Transverse colon (tissue), 4 donors: ENCODE measurements at regions of chr5 and their contacts with region 1.

Region 1: GRCh38 chr5:134648425-134649162 is at the start of gene SEC24A:
- DNase-seq: peak; percentile 94
- H3K4me3 ChIP-seq: peak within 1 kb of the TSS; percentile 79 to 95 (median 88)
- H3K27ac ChIP-seq: peak within 1 kb of the TSS; percentile 92 to 98 (median 96)
- H3K4me1 ChIP-seq: peaks cover 3 to 37% (median 22%) of the 10 kb centered on the region in 4 donors
- H3K27me3 ChIP-seq: no peaks in the 10 kb centered on the region
- CTCF ChIP-seq: peak in 2 of 5 experiments; percentile 15 to 20
- EP300 ChIP-seq: no peak
- POLR2A ChIP-seq: peak; percentile 81
- total RNA-seq, gene SEC24A: 9.2 to 26.7 (median 18.6) TPM

Region 2: GRCh38 chr5:134188092-134188491 is 460.5 kb before region 1 on chr5:
- in situ Hi-C with region 1: no loop called
- intact Hi-C with region 1: no loop called
- DNase-seq: no peak
- H3K4me3 ChIP-seq: no peak overlapping the region
- H3K27ac ChIP-seq: no peak overlapping the region
- H3K4me1 ChIP-seq: no peaks in the 10 kb centered on the region
- H3K27me3 ChIP-seq: no peaks in the 10 kb centered on the region
- CTCF ChIP-seq: no peak
- EP300 ChIP-seq: no peak
- POLR2A ChIP-seq: no peak

Region 3: GRCh38 chr5:134626369-134627014 is 22.1 kb before region 1 on chr5:
- in situ Hi-C with region 1: no loop called
- intact Hi-C with region 1: loop called (anchors 1 kb)
- DNase-seq: no peak
- H3K4me3 ChIP-seq: no peak overlapping the region
- H3K27ac ChIP-seq: peak overlapping the region; percentile 32 to 67 (median 51)
- H3K4me1 ChIP-seq: peaks cover 5 to 36% (median 23%) of the 10 kb centered on the region in 4 donors
- H3K27me3 ChIP-seq: no peaks in the 10 kb centered on the region
- CTCF ChIP-seq: no peak
- EP300 ChIP-seq: no peak
- POLR2A ChIP-seq: no peak

Region 4: DNA sequence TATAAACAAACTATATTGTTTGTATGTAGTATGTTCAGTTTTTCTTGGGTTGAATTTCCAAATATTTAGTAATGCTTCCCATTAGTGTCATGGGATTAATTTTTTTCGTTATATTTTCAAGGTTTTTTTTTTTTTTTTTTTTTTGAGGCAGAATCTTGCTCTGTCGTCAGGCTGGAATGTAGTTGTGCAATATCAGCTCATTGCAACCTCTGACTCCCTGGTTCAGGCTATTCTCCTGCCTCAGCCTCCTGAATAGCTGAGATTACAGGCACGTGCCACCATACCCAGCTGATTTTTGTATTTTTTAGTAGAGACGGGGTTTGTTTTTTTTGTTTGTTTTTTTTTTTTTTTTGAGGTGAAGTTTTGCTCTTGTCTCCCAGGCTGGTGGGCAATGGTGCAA is 120.6 kb after region 1 on chr5:
- in situ Hi-C with region 1: no loop called
- intact Hi-C with region 1: no loop called
- DNase-seq: no peak
- H3K4me3 ChIP-seq: no peak overlapping the region
- H3K27ac ChIP-seq: no peak overlapping the region
- H3K4me1 ChIP-seq: no peaks in the 10 kb centered on the region
- H3K27me3 ChIP-seq: no peaks in the 10 kb centered on the region
- CTCF ChIP-seq: no peak
- EP300 ChIP-seq: no peak
- POLR2A ChIP-seq: no peak